Activated CD4-positive, alpha-beta T cell treated with anti-CD3 and anti-CD28 coated beads, Interleukin-2, amount 10 ng/mL, durations not matched to agents 24 days and 14 days (primary cell): ENCODE measurements at regions of chr12 and their contacts with region 1.

Region 1: GRCh38 chr12:103965590-103966504 is at the start of gene TDG:
- DNase-seq: peak; percentile 99
- H3K4me3 Mint-ChIP-seq: peak within 1 kb of the TSS; percentile 98
- H3K27ac Mint-ChIP-seq: peak within 1 kb of the TSS; percentile 99
- H3K4me1 Mint-ChIP-seq: peaks cover 39% of the 10 kb centered on the region
- H3K27me3 Mint-ChIP-seq: peaks cover 2% of the 10 kb centered on the region
- total RNA-seq, gene TDG: 74.5 and 76.4 TPM in 2 replicates

Region 2: DNA sequence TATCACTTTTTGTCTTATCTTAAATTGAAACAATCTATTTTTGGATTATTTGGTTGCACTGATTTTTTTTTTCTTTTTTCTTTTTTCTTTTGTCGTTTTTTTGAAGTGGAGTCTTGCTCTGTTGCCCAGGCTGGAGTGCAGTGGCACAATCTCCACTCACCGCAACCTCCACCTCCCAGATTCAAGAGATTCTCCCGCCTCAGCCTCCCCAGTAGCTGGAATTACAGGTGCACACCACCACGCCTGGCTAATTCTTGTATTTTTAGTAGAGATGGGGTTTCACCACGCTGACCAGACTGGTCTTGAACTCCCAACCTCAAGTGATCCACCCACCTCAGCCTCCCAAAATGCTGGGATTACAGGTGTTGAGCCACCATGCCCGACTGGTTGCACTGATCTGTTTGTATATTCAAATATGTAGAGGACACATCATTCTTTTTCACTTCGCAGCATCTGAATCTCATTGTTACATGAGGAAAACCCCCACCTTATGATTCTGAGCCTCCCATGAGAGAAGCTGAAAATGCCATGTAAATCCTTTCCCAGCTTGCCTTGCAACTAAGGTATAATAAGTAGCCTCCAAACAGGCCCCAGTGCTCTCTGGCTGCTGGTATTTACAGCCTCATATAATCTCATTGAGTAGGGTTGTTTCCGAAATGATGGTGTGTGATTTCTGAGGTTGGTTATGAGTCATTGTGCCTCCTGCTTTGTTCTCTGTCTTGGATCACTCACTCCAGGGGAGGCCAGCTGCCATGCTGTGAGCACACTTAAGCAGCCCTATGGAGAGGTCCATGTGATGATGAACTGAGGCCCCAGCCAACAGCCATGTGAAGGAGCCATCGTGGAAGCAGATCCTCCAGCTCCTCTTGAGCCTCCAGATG is 40.8 kb before region 1 on chr12:
- intact Hi-C with region 1: loop called (anchors 1 kb)
- DNase-seq: peak; percentile 80
- H3K4me3 Mint-ChIP-seq: peak overlapping the region; percentile 67
- H3K27ac Mint-ChIP-seq: peak overlapping the region; percentile 86
- H3K4me1 Mint-ChIP-seq: peaks cover 36% of the 10 kb centered on the region
- H3K27me3 Mint-ChIP-seq: peaks cover under 1% of the 10 kb centered on the region

Region 3: GRCh38 chr12:104064031-104064822 is 98.4 kb after region 1 on chr12 and contains the start of gene HCFC2:
- intact Hi-C with region 1: loop called (anchors 1 kb)
- DNase-seq: peak; percentile 97
- H3K4me3 Mint-ChIP-seq: peak within 1 kb of the TSS; percentile 98
- H3K27ac Mint-ChIP-seq: peak within 1 kb of the TSS; percentile 91
- H3K4me1 Mint-ChIP-seq: peaks cover 20% of the 10 kb centered on the region
- H3K27me3 Mint-ChIP-seq: peaks cover 30% of the 10 kb centered on the region
- total RNA-seq, gene HCFC2: 8.2 and 8.6 TPM in 2 replicates

Region 4: GRCh38 chr12:104137913-104138796 is 172.3 kb after region 1 on chr12 and contains the start of gene NFYB:
- intact Hi-C with region 1: loop called (anchors 1 kb)
- DNase-seq: peak; percentile 98
- H3K4me3 Mint-ChIP-seq: peak within 1 kb of the TSS; percentile 87
- H3K27ac Mint-ChIP-seq: peak within 1 kb of the TSS; percentile 91
- H3K4me1 Mint-ChIP-seq: peaks cover 16% of the 10 kb centered on the region
- H3K27me3 Mint-ChIP-seq: peaks cover 17% of the 10 kb centered on the region
- total RNA-seq, gene NFYB: 25.4 and 28.6 TPM in 2 replicates

Region 5: DNA sequence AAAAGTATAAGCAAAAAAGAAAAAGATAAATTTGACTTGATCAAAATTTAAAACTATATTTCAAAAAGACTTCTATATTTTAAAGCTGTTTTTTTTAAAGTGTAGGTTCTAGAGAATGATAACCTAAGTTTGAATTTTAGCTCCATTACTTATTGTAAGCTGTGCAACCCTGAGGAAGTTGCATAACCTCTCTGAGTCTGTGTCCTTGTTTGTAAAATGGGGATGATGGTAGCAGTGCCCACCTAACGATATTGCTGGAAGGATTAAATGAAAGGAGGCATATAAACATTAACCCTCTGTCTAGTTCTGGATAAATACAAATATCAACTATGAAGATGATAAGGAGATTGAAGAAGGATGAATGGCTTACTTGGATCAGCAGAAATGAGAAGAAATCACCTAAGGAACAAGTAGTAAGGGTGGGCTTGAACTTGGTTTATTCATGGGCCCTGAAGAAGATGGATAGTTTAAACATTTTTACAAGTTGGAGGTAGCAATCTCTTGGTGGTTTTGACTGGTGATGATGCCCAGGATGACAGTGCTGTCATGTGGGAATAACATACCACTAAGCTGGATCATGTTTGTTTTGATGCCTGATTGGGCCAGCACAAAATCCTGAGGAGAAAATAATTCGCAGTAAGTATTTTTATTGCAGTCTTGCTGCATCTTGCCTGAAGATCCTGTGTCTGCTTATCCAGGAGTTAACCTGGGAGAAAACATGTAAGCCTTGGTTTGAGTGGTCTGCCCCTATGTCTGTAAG is 284.7 kb after region 1 on chr12:
- intact Hi-C with region 1: no loop called
- DNase-seq: no peak
- H3K4me3 Mint-ChIP-seq: no peak overlapping the region
- H3K27ac Mint-ChIP-seq: no peak overlapping the region
- H3K4me1 Mint-ChIP-seq: no peaks in the 10 kb centered on the region
- H3K27me3 Mint-ChIP-seq: no peaks in the 10 kb centered on the region

Region 6: DNA sequence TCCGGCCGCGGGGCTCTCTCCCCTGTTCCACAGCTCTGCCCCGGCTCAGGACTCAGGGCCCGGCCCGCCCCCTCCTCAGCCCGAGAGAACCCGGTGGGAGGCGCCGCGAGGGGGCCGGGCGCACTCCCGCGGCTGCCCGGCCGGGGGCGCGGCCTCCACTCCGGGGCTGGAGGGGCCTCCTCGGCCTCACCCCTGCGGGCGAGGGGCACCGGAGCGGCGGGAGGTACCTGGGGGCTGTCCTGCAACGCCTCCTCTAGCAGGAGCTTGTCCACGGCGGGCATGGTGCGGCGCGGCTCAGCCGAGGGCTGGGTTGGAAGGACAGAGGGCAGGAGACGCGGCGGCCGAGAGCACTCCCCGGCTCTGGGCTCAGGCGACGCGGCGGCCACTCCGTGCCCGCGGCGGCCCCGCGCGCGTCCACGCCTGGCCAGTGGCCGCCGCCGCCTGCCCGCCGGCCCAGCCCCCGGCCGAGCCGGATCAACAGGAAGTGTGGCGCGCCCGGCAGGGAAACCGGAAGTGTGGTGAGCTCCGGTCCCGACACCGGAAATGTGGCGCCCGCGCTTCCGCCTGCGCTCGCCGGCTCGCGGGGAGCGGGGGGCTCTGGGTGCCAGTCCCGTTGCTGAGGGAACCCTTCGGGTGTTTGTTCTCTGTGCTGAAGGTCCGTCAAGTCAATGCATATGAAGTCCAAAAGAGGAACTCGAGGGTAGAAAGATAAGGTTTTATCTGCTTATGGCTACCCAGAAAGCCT is 1270.1 kb after region 1 on chr12 and contains the start of gene APPL2:
- intact Hi-C with region 1: loop called (anchors 5 kb)
- DNase-seq: peak; percentile 94
- H3K4me3 Mint-ChIP-seq: peak within 1 kb of the TSS; percentile 87
- H3K27ac Mint-ChIP-seq: peak within 1 kb of the TSS; percentile 85
- H3K4me1 Mint-ChIP-seq: peaks cover 32% of the 10 kb centered on the region
- H3K27me3 Mint-ChIP-seq: peaks cover 2% of the 10 kb centered on the region
- total RNA-seq, gene APPL2: 18.2 and 20.5 TPM in 2 replicates